Caco-2 (cell line): ENCODE measurements at regions of chr4 and their contacts with region 1.

Region 1: GRCh38 chr4:138680989-138681604 is 334.5 kb upstream of the NOCT start:
- DNase-seq: peak; percentile 63 to 79
- H3K4me3 ChIP-seq: no peak overlapping the region
- H3K4me3 Mint-ChIP-seq: no peak overlapping the region
- H3K27ac Mint-ChIP-seq: no peak overlapping the region
- H3K4me1 ChIP-seq: peaks cover 10% of the 10 kb centered on the region
- H3K4me1 Mint-ChIP-seq: peaks cover 11% of the 10 kb centered on the region
- H3K27me3 ChIP-seq: no peaks in the 10 kb centered on the region
- H3K27me3 Mint-ChIP-seq: no peaks in the 10 kb centered on the region
- CTCF ChIP-seq: peak; percentile 72 to 89

Region 2: GRCh38 chr4:137819964-137820383 is 861.1 kb before region 1 on chr4:
- CTCF ChIA-PET with region 1: no interaction called
- POLR2A ChIA-PET with region 1: no interaction called
- intact Hi-C with region 1: loop called (anchors 1 kb)
- DNase-seq: peak; percentile 46 to 58
- H3K4me3 ChIP-seq: no peak overlapping the region
- H3K4me3 Mint-ChIP-seq: no peak overlapping the region
- H3K27ac Mint-ChIP-seq: no peak overlapping the region
- H3K4me1 ChIP-seq: no peaks in the 10 kb centered on the region
- H3K4me1 Mint-ChIP-seq: no peaks in the 10 kb centered on the region
- H3K27me3 ChIP-seq: no peaks in the 10 kb centered on the region
- H3K27me3 Mint-ChIP-seq: no peaks in the 10 kb centered on the region
- CTCF ChIP-seq: peak; percentile 64 to 76

Region 3: DNA sequence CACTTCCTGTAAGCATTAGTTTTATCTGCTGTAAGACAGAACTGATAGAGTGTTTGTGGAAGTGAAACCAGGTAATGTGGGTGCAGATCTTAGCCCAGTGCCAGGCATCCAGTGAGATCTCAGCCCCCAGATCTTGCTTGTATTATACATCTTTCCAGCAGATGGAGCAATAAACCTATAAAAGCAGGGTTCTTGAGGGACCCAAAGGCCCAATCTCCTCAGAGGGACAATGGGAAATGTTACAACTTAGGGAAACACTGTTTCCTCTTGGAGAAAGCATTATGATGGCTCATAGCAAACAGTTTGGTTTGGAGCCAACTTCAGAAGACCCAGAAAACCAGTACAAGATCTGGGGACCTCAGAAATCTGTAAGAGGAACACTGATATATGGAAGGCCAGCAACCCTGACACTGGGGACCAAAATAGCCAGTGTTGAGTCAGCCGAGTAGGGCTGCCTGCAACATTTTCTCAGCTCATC is 645.3 kb before region 1 on chr4:
- CTCF ChIA-PET with region 1: interaction called, 3 read pairs
- POLR2A ChIA-PET with region 1: no interaction called
- intact Hi-C with region 1: loop called (anchors 1 kb)
- DNase-seq: peak in 1 of 2 experiments; percentile 56
- H3K4me3 ChIP-seq: no peak overlapping the region
- H3K4me3 Mint-ChIP-seq: no peak overlapping the region
- H3K27ac Mint-ChIP-seq: no peak overlapping the region
- H3K4me1 ChIP-seq: no peaks in the 10 kb centered on the region
- H3K4me1 Mint-ChIP-seq: peaks cover under 1% of the 10 kb centered on the region
- H3K27me3 ChIP-seq: no peaks in the 10 kb centered on the region
- H3K27me3 Mint-ChIP-seq: no peaks in the 10 kb centered on the region
- CTCF ChIP-seq: peak; percentile 58 to 67

Region 4: GRCh38 chr4:138182838-138183426 is 498.2 kb before region 1 on chr4:
- CTCF ChIA-PET with region 1: interaction called, 4 read pairs
- POLR2A ChIA-PET with region 1: no interaction called
- intact Hi-C with region 1: loop called (anchors 5 kb)
- DNase-seq: peak in 1 of 2 experiments; percentile 45
- H3K4me3 ChIP-seq: no peak overlapping the region
- H3K4me3 Mint-ChIP-seq: no peak overlapping the region
- H3K27ac Mint-ChIP-seq: no peak overlapping the region
- H3K4me1 ChIP-seq: no peaks in the 10 kb centered on the region
- H3K4me1 Mint-ChIP-seq: no peaks in the 10 kb centered on the region
- H3K27me3 ChIP-seq: no peaks in the 10 kb centered on the region
- H3K27me3 Mint-ChIP-seq: no peaks in the 10 kb centered on the region
- CTCF ChIP-seq: peak; percentile 50 to 60

Region 5: DNA sequence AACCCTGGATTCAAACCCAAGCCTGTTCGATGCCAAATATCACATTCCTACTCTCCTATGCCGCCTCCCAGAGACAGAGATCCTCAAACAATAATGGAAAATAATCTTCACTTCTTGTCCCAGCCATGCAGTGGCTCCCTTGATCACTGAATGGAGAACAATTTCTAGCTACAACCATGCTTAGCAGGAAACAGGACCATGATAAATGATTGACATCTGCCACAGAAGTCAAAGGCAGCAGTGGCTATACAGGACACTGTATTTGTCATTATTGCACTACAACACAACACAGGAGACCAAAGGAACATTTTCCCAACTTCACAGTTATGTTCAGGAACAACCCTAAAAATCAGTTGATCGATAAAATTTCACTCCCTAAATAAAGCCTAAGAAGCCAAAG is 195.6 kb before region 1 on chr4:
- CTCF ChIA-PET with region 1: no interaction called
- POLR2A ChIA-PET with region 1: no interaction called
- intact Hi-C with region 1: loop called (anchors 2 kb)
- DNase-seq: peak in 1 of 2 experiments; percentile 1
- H3K4me3 ChIP-seq: no peak overlapping the region
- H3K4me3 Mint-ChIP-seq: no peak overlapping the region
- H3K27ac Mint-ChIP-seq: no peak overlapping the region
- H3K4me1 ChIP-seq: no peaks in the 10 kb centered on the region
- H3K4me1 Mint-ChIP-seq: no peaks in the 10 kb centered on the region
- H3K27me3 ChIP-seq: no peaks in the 10 kb centered on the region
- H3K27me3 Mint-ChIP-seq: no peaks in the 10 kb centered on the region
- CTCF ChIP-seq: no peak

Region 6: DNA sequence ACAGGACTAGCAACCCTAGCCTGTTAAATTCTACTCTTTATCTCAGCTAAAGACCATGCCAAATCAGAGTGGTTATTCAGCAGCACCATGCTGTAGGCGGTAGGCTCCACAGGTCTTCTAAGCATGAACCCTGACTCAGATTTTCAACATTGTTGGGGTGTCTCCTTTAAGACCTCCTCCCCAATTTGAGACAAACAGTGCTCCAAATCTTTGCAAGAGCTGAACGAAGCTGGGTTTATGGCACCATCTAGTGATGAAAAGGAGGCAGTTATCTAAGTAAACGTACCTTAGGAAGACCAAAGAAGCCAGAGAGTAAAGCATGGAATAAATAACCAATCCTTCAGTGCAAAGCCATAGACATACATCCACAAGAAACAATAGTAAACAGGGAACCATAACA is 104.4 kb before region 1 on chr4:
- CTCF ChIA-PET with region 1: interaction called, 20 read pairs
- POLR2A ChIA-PET with region 1: no interaction called
- intact Hi-C with region 1: loop called (anchors 1 kb)
- DNase-seq: peak in 1 of 2 experiments; percentile 33
- H3K4me3 ChIP-seq: no peak overlapping the region
- H3K4me3 Mint-ChIP-seq: no peak overlapping the region
- H3K27ac Mint-ChIP-seq: no peak overlapping the region
- H3K4me1 ChIP-seq: no peaks in the 10 kb centered on the region
- H3K4me1 Mint-ChIP-seq: no peaks in the 10 kb centered on the region
- H3K27me3 ChIP-seq: no peaks in the 10 kb centered on the region
- H3K27me3 Mint-ChIP-seq: no peaks in the 10 kb centered on the region
- CTCF ChIP-seq: peak; percentile 47 to 63

Region 7: DNA sequence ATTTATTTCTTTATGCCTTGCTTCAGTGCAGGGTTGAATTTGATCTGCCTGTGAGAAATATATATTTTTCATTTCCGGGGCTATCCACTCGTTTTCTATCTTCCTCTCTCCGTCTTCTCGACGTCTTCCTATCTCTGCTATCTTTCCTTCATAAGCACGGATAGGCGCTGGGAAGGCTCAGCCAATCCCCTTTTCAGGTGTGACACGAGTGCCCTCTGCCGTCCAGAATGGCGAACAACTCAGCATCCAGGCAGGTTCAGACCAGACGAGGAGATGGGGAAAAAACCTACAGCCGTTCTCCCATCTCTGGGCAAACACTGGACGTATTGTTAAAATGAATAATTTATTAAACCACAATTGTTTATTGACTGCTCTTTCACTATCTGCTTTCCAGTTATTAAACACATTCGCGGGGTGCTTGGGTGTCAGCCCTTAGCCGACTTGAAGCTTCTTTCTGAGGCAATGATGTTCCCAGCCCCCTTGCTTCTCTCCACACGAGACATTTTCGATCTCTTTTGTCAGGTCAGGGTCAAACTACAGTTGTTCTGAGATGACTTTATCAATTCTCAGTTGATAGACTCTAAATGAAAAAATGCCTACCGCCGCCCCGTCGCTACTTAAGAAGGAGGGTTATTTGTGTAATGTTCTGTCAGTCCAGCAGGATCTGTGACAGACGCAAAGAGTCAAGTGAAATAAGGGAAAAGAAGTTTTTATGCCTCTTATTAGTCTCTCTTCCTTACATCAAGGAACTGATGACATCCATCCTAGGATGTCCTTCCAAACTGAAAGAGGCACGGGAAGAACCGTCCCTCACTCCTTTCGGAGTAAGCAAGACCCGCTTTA is 238.2 kb after region 1 on chr4:
- CTCF ChIA-PET with region 1: no interaction called
- POLR2A ChIA-PET with region 1: no interaction called
- intact Hi-C with region 1: loop called (anchors 1 kb)
- DNase-seq: peak; percentile 72 to 78
- H3K4me3 ChIP-seq: no peak overlapping the region
- H3K4me3 Mint-ChIP-seq: peak overlapping the region; percentile 42
- H3K27ac Mint-ChIP-seq: no peak overlapping the region
- H3K4me1 ChIP-seq: no peaks in the 10 kb centered on the region
- H3K4me1 Mint-ChIP-seq: peaks cover 10% of the 10 kb centered on the region
- H3K27me3 ChIP-seq: no peaks in the 10 kb centered on the region
- H3K27me3 Mint-ChIP-seq: no peaks in the 10 kb centered on the region
- CTCF ChIP-seq: peak; percentile 65 to 77